ENCODE measurements at regions of chr3 and their contacts with region 1.

Region 1: DNA sequence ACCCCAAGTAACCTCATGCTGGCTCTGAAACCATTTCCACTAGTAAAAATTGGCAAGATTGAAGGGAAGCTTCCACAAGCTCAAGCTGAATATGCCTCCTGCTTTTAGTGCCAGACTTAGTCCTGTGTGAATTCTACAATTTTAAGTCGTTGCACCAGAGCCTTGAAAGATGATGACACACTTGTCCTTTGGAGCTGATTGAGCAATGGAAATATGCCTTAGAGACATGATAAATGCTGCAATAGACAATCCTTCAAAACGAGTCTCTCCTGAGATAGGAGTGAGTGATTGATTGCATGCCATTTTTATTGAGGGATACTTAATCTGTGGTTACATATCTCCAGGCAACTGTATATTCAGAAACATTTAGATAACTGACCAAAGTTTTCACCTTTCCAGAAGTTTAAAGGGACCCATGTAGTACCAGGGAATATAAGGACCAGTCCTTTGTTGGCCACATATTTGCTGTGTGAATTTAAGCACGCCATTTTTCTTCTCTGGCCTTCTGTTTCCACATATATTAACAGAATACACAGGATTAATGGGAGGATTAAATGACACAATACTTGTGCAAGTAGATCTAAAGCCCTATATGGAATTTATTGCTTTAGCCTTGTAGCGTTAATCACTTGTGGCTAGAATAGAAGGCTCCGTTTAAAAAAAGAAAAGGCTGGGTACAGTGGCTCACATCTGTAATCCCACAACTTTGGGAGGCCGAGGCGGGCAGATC is 65.1 kb downstream of the PPARG start:
- DNase-seq: no peak
- ATAC-seq: no peak
- H3K4me3 ChIP-seq: no peak overlapping the region
- H3K27ac ChIP-seq: peak overlapping the region; percentile 39
- H3K4me1 ChIP-seq: peaks cover 55% of the 10 kb centered on the region
- H3K27me3 ChIP-seq: no peaks in the 10 kb centered on the region
- CTCF ChIP-seq: no peak

Region 2: DNA sequence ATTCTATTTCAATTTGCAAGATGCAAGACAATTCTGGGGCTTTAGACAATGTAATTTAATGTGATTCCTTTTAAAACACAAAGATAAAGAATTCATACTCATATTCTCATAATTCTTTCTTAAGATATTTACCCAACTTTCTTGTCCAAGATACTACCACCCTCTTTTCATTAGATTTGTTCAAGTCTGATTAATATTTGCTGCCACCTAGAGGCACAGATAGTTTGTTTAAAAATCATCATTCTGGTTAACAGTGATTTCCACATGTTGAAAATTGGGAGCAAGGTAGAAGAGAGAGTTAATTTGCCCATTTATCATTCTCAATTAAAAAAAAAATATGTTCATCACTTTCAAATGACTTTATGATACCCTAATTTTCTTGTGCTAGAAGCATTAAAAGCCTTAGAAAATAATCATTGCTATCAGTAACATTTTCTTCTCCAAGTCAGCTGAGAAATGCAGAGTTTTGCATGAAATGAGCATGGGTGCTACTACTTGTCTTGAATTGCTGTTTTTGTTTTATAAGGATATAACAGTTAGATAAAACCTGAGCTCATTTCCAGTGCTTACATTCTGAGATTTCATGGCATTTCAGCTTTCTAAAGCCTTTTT is 518.8 kb before region 1 on chr3:
- CTCF ChIA-PET with region 1: no interaction called
- POLR2A ChIA-PET with region 1: interaction called, 18 read pairs
- in situ Hi-C with region 1: no loop called
- intact Hi-C with region 1: no loop called
- DNase-seq: no peak
- ATAC-seq: no peak
- H3K4me3 ChIP-seq: no peak overlapping the region
- H3K27ac ChIP-seq: no peak overlapping the region
- H3K4me1 ChIP-seq: no peaks in the 10 kb centered on the region
- H3K27me3 ChIP-seq: no peaks in the 10 kb centered on the region
- CTCF ChIP-seq: peak; percentile 49; the same call in 1 of the 2 replicates

Region 3: DNA sequence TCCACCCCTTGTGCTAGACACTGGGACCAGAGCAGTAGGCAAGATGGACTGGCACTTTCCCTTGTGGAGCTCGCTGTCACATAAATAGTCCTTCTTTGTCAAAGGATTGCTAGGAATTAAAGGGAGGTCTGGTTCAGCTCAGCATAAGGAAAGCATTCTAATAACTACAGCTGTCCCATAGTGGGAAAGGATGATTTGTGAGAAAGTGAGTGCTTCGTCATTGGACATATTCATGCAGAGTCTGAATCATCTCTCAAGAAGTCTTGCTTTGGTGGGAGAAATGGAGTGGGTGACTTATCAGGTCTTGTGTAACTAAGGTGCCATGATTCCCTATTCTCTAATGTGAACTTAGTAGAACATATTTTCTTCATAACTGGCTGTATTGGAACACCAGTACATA is 50.4 kb before region 1 on chr3:
- CTCF ChIA-PET with region 1: no interaction called
- POLR2A ChIA-PET with region 1: no interaction called
- in situ Hi-C with region 1: no loop called
- intact Hi-C with region 1: no loop called
- DNase-seq: no peak
- ATAC-seq: 0 out of 2 replicates have a peak, but pooled peaks have one; percentile 12
- H3K4me3 ChIP-seq: no peak overlapping the region
- H3K27ac ChIP-seq: peak overlapping the region; percentile 51; the same call in 1 of the 2 replicates
- H3K4me1 ChIP-seq: peaks cover 82% of the 10 kb centered on the region
- H3K27me3 ChIP-seq: no peaks in the 10 kb centered on the region
- CTCF ChIP-seq: no peak